Left colon (tissue), 2 donors: ENCODE measurements at regions of chr5 and their contacts with region 1.

Region 1: DNA sequence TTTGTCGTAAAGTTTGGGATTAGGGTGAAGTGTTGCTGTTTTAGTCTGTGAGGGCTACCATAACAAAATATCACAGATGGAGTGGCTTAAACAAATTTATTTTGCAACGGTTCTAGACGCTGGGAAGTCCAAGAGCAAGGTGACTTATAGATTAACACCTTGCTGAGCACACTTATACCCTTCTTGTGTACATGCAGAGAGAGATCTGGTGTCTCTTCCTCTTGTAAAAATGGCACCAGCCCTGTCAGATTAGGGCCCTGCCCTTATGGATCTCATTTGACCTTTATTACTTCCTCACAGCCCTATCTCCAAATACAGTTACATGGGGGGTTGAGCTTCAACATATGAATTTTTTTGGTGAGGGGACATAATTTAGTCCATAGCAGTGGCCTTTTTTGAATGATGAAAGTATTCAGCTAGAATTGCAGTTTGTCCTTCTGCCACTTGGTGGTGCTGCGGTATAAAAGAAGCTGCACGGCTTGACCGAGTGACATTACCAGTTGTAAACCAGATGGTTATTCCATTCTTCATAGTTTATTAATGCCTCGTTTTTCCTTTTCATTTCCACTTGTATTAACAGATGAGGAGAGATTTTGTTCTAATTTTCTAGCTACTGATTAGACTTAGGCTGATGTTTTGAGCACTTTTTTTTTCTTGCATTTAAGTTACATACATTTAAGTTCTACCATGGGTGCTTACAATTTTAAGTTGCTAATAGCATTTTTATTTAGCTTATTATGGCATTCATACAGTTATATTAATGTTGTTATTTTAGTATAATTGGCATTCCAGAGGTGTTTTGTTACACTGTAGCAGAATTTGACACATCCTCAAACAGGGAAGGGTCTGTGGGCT is 19.4 kb downstream of the DCP2 start:
- DNase-seq: peak in 1 of 2 donors; percentile 81
- ATAC-seq: peak; percentile 74

Region 2: GRCh38 chr5:112551419-112552032 is 444.5 kb before region 1 on chr5:
- intact Hi-C with region 1: no loop called
- DNase-seq: no peak
- ATAC-seq: peak; percentile 73

Region 3: GRCh38 chr5:113320273-113320780 is 324.3 kb after region 1 on chr5:
- intact Hi-C with region 1: loop called in 1 of 2 experiments (anchors 10 kb)
- DNase-seq: no peak
- ATAC-seq: no peak

Region 4: DNA sequence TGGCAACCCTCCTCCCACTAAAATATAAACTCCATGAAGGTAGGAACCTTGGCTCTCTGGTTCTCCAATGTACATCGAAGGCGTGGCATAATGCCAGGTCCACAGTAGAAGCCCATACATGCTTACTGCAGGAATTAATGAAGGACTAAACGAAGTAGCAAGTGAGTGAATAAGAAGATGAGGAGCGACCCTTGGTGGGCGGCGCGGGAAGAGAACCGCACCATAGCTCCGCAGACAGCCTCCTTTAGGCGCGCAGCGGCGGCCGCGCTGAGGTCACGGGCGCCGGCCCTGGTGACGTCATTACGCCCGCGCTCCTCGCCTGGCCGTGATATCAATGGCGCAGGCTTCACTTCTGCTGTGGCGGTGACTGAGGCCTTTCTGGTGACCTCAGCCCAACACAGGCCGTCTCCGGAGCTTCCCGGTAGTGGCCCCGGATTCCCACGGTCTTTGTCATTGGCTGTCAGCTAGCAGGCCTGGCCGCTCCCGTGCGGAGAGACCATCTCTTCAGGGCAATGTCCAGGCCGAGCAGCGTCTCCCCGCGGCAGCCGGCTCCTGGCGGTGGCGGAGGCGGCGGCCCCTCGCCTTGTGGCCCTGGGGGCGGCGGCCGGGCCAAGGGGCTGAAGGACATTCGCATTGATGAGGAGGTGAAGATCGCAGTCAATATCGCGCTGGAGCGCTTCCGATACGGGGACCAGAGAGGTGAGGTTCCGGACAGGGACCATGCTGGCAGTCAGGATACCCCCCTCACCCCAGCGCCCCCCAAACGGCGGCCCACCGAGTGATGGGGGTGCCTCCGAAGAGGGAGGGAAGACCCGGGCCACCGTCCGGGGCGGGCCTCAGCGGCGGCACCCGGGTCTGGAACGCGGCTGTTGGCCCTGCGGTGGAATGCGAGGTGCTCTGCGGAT is 517.6 kb after region 1 on chr5 and contains the start of gene YTHDC2:
- intact Hi-C with region 1: loop called in 1 of 2 experiments (anchors 5 kb)
- DNase-seq: peak; percentile 83 to 90
- ATAC-seq: peak; percentile 96
- total RNA-seq, gene YTHDC2: 22.3 to 23.2 TPM

Region 5: GRCh38 chr5:113606298-113607134 is 610.5 kb after region 1 on chr5:
- intact Hi-C with region 1: loop called in 1 of 2 experiments (anchors 5 kb)
- DNase-seq: peak in 1 of 2 donors; percentile 21
- ATAC-seq: peak; percentile 77